Psoas muscle (tissue), 8 donors: ENCODE measurements at regions of chr2 and their contacts with region 1.

Region 1: DNA sequence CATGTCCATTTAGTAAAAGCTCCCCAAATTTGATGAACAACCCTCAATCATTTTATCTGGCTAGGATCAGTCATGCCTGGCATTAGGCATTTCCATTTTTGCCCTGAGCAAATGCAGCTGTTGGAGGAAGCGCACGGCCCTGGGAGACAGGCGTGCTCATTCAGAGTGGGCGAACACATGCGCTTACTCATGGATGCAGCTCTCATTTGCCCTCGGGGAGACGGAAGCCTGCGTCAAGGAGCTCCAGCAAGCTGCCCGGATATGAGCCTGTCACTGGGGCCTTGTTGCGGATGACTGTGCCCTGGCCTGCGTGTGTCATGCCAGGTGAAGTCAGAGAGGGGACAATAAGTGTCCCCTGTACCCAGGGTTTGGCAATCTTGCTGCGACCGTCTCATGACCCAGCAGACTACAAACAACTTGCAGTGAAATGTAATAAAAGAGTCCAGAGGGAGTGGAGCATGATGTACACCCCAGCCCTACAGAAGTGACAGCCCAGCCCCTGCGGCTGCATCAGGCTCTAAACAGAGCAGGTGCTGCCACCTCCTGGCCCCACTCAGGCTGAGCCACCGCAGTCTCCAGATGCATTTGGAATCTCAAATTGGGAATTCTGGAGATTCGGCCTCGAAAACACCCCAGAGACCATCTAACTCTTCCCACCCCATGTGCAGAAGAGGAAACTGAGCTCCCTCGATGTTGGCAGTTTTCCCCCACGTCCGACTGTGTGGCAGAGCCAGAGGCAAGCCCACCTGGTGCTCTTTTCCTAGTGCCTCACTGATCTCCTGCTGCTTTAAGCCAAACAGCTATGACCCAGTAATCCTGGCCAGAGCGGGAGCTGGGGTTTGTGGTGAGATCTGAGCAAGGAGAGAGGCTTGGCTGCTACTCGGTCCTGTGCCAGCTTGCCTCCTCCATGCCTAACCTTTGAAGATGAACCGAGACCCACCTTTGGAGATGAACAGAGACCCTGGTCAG is 105.0 kb upstream of the ALK start:
- DNase-seq: peak; percentile 29 to 56
- ATAC-seq: peak; percentile 60 to 73 (median 66)
- H3K4me3 ChIP-seq: no peak overlapping the region
- H3K27ac ChIP-seq: no peak overlapping the region
- H3K4me1 ChIP-seq: no peaks in the 10 kb centered on the region
- H3K27me3 ChIP-seq: peaks cover 0 to 14% (median 0%) of the 10 kb centered on the region in 3 donors
- CTCF ChIP-seq: peak; percentile 47

Region 2: GRCh38 chr2:29923110-29923721 is 103.2 kb before region 1 on chr2:
- intact Hi-C with region 1: loop called (anchors 2 to 5 kb)
- DNase-seq: peak in 1 of 2 donors; percentile 32
- ATAC-seq: peak in 1 of 4 donors; percentile 57
- H3K4me3 ChIP-seq: no peak overlapping the region
- H3K27ac ChIP-seq: no peak overlapping the region
- H3K4me1 ChIP-seq: peaks cover 20% of the 10 kb centered on the region
- H3K27me3 ChIP-seq: peaks cover under 1 to 60% (median 9%) of the 10 kb centered on the region in 3 donors
- CTCF ChIP-seq: peak; percentile 84